Activated CD4-positive, alpha-beta T cell treated with anti-CD3 and anti-CD28 coated beads for 36 hours (primary cell): ENCODE measurements at regions of chr7 and their contacts with region 1.

Region 1: DNA sequence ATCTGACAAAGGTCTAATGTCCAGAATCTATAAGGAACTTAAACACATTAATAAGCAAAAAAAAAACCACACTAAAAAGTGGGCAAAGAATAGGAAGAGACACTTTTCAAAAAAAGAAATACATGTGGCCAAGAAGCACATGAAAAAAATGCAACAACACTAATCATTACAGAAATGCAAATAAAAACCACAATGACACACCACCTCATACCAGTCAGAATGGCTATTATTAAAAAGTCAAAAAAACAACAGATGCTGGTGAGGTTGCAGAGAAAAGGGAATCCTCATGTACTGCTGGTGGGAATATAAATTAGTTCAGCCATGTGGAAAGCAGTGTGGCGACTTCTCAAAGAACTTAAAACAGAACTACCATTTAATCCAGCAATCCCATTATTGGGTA is 119.0 kb downstream of the LMBR1 start:
- DNase-seq: no peak
- ATAC-seq: no peak
- H3K4me3 Mint-ChIP-seq: no peak overlapping the region
- H3K27ac Mint-ChIP-seq: no peak overlapping the region
- H3K4me1 Mint-ChIP-seq: peaks cover 58% of the 10 kb centered on the region
- H3K27me3 Mint-ChIP-seq: no peaks in the 10 kb centered on the region

Region 2: GRCh38 chr7:156640257-156640948 is 133.6 kb before region 1 on chr7 and contains the start of gene RNF32:
- CTCF ChIA-PET with region 1: no interaction called
- POLR2A ChIA-PET with region 1: no interaction called
- intact Hi-C with region 1: loop called in 1 of 2 experiments (anchors 1 kb)
- DNase-seq: peak; percentile 100
- ATAC-seq: peak; percentile 90
- H3K4me3 Mint-ChIP-seq: peak within 1 kb of the TSS; percentile 76
- H3K27ac Mint-ChIP-seq: peak within 1 kb of the TSS; percentile 87
- H3K4me1 Mint-ChIP-seq: peaks cover 15% of the 10 kb centered on the region
- H3K27me3 Mint-ChIP-seq: peaks cover 29% of the 10 kb centered on the region
- total RNA-seq, gene RNF32: 0.71 to 0.90 TPM

Region 3: GRCh38 chr7:156751319-156751718 is 22.6 kb before region 1 on chr7:
- CTCF ChIA-PET with region 1: interaction called, 4 read pairs
- POLR2A ChIA-PET with region 1: no interaction called
- intact Hi-C with region 1: loop called (anchors 1 kb)
- DNase-seq: peak; percentile 72
- ATAC-seq: peak; percentile 94
- H3K4me3 Mint-ChIP-seq: no peak overlapping the region
- H3K27ac Mint-ChIP-seq: no peak overlapping the region
- H3K4me1 Mint-ChIP-seq: peaks cover 16% of the 10 kb centered on the region
- H3K27me3 Mint-ChIP-seq: no peaks in the 10 kb centered on the region